Heart left ventricle (tissue), 16 donors: ENCODE measurements at regions of chrX and their contacts with region 1.

Region 1: DNA sequence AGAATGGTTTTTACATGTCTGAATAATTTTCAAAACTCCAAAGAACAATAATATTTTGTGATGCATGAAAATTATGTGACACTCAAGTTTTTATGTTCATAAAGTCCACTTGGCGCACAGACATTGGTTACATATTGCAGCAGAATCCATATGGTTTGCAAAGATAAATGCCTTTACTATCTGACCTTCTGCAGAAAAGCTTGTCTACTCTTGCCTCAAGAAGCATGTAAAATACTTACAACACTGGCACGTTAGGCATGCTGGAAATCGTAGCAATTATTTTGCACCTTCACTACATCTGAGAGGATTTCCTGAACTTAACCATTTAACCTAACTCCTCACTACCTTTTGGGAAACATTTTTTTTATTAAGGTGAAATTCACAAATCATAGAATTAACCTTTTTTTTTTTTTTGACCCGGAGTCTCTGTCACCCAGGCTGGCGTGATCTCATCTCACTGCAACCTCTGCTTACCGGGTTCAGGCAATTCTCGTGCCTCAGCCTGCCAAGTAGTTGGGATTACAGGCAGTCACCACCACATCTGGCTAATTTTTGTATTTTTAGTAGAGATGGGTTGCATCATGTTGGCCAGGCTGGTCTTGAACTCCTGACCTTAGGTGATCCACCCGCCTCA is 3.5 kb upstream of the XG start:
- DNase-seq: no peak
- ATAC-seq: no peak
- H3K4me3 ChIP-seq: no peak overlapping the region
- H3K27ac ChIP-seq: no peak overlapping the region
- H3K4me1 ChIP-seq: peaks cover 0 to 9% (median 0%) of the 10 kb centered on the region in 12 donors
- H3K27me3 ChIP-seq: no peaks in the 10 kb centered on the region
- CTCF ChIP-seq: no peak
- POLR2A ChIP-seq: no peak

Region 2: GRCh38 chrX:2664502-2664901 is 83.8 kb before region 1 on chrX:
- intact Hi-C with region 1: loop called in 1 of 10 experiments (anchors 10 kb)
- DNase-seq: peak in 4 of 5 donors; percentile 71 to 73 (median 72)
- ATAC-seq: peak; percentile 42 to 93 (median 68)
- H3K4me3 ChIP-seq: no peak overlapping the region
- H3K27ac ChIP-seq: peak overlapping the region in 6 of 12 donors; percentile 4 to 62 (median 44)
- H3K4me1 ChIP-seq: peaks cover 0 to 18% (median 0%) of the 10 kb centered on the region in 12 donors
- H3K27me3 ChIP-seq: no peaks in the 10 kb centered on the region
- CTCF ChIP-seq: no peak
- POLR2A ChIP-seq: no peak

Region 3: DNA sequence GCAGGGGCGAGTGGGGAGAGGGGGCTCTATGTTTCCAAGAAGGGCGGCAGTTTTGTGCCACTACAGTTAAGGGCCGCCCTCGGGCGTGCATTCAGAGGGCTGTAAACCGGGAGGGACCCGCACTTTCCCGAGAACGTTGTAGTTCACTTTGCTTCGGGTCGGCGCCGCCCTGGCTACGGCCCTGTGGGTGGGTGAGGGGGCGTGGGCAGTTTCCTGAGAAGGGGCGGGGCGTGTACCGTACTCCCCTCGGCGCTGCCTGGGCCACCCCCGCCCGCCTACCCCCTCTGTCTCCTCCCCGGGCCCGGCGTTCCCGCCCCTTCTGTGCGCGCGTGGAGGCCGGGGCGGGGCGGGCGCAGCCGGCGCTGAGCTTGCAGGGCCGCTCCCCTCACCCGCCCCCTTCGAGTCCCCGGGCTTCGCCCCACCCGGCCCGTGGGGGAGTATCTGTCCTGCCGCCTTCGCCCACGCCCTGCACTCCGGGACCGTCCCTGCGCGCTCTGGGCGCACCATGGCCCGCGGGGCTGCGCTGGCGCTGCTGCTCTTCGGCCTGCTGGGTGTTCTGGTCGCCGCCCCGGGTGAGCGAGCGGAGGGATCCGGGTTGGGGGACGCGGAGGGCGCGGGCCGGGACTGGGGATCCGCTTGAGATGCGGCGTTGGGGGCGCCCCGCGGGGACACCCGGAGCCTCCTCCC is 57.3 kb before region 1 on chrX and contains the start of gene CD99:
- intact Hi-C with region 1: loop called in 1 of 10 experiments (anchors 10 kb)
- DNase-seq: peak; percentile 93 to 97 (median 95)
- ATAC-seq: peak; percentile 89 to 98 (median 95)
- H3K4me3 ChIP-seq: peak within 1 kb of the TSS; percentile 72 to 100 (median 96)
- H3K27ac ChIP-seq: peak within 1 kb of the TSS; percentile 71 to 96 (median 91)
- H3K4me1 ChIP-seq: peaks cover 9 to 47% (median 35%) of the 10 kb centered on the region in 12 donors
- H3K27me3 ChIP-seq: no peaks in the 10 kb centered on the region
- CTCF ChIP-seq: no peak
- POLR2A ChIP-seq: peak in 1 of 2 donors; percentile 76
- total RNA-seq, gene CD99: 216 to 475 (median 264) TPM